ENCODE measurements at regions of chr5 and their contacts with region 1.

Region 1: DNA sequence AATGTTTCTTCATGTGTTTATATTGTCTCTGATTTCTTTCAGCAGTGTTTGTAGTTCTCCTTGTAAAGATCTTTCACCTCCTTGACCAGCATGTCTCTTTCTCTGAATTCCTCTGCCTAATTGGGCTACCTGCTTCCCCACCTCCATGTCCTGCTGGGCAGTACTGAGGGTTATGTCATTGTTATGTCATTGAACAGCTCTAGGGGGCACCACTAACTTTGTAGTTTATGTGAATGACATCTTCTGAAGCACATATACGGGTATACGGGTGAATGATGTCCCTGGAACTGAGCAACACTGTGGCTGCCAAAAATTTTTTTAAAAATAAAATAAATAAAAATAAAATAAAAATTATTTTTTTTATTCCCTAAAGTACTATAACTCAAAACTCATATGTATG is 16.9 kb upstream of the SNCAIP start:
- DNase-seq: no peak
- ATAC-seq: peak; percentile 82
- H3K4me3 ChIP-seq: no peak overlapping the region
- H3K27ac ChIP-seq: no peak overlapping the region
- H3K4me1 ChIP-seq: peaks cover 12% of the 10 kb centered on the region
- H3K27me3 ChIP-seq: no peaks in the 10 kb centered on the region; a peak in 1 of 4 replicates
- CTCF ChIP-seq: peak; percentile 36 to 46 (median 38); a peak in 4 of 6 replicates
- EP300 ChIP-seq: no peak
- POLR2A ChIP-seq: no peak
- RAD21 ChIP-seq: peak; percentile 29; the same call in 1 of the 2 replicates

Region 2: DNA sequence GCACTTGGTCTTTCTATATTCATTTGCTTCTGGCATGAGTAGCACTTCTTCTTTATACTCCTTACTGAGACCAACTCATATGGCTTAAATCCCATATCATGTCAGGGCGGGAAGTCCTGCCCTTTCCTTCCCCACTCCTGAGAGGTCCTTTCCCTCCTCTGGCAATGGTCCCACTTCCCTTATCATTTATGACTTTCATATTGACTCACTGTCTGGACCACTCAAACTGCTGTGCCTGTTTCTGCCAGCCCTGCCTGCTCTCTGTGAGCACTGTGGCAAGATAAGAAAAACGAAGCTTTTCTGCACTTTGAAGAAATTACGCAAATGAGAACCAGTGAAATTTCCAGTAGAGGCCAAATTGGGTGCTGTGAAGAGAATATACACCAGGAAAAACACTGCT is 107.7 kb before region 1 on chr5:
- CTCF ChIA-PET with region 1: no interaction called
- POLR2A ChIA-PET with region 1: no interaction called
- RAD21 ChIA-PET with region 1: no interaction called
- SMC1A ChIA-PET with region 1: no interaction called
- in situ Hi-C with region 1: no loop called
- intact Hi-C with region 1: no loop called
- DNase-seq: no peak
- ATAC-seq: no peak
- H3K4me3 ChIP-seq: no peak overlapping the region
- H3K27ac ChIP-seq: no peak overlapping the region
- H3K4me1 ChIP-seq: no peaks in the 10 kb centered on the region; the same call in 1 of the 2 replicates
- H3K27me3 ChIP-seq: no peaks in the 10 kb centered on the region; a peak in 2 of 4 replicates
- CTCF ChIP-seq: no peak
- EP300 ChIP-seq: no peak
- POLR2A ChIP-seq: no peak
- RAD21 ChIP-seq: no peak

Region 3: DNA sequence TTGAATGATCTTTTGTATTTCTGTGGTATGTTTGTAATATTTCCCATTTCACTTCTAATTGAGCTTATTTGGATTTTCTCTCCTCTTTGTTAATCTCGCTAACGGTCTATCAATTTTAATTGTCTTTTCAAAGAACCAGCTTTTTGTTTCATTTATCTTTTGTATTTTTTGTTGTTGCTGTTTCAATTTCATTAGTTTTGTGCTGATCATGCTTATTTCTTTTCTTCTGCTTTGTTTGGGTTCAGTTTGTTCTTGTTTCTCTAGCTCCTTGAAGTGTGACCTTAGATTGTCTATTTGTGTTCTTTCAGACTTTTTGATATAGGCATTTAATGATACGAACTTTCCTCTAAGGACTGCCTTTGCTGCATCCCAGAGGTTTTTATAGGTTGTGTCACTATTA is 11.5 kb before region 1 on chr5:
- CTCF ChIA-PET with region 1: interaction called, 10 read pairs
- POLR2A ChIA-PET with region 1: interaction called, 3 read pairs
- RAD21 ChIA-PET with region 1: interaction called, 3 read pairs
- SMC1A ChIA-PET with region 1: interaction called, 3 read pairs
- in situ Hi-C with region 1: no loop called
- intact Hi-C with region 1: no loop called
- DNase-seq: no peak
- ATAC-seq: no peak
- H3K4me3 ChIP-seq: no peak overlapping the region
- H3K27ac ChIP-seq: no peak overlapping the region
- H3K4me1 ChIP-seq: no peaks in the 10 kb centered on the region
- H3K27me3 ChIP-seq: no peaks in the 10 kb centered on the region
- CTCF ChIP-seq: no peak
- EP300 ChIP-seq: no peak
- POLR2A ChIP-seq: no peak
- RAD21 ChIP-seq: no peak

Region 4: GRCh38 chr5:122306461-122306860 is 11.3 kb after region 1 on chr5:
- CTCF ChIA-PET with region 1: interaction called, 13 read pairs
- POLR2A ChIA-PET with region 1: interaction called, 3 read pairs
- RAD21 ChIA-PET with region 1: interaction called, 4 read pairs
- SMC1A ChIA-PET with region 1: interaction called, 11 read pairs
- in situ Hi-C with region 1: no loop called
- intact Hi-C with region 1: no loop called
- DNase-seq: no peak
- ATAC-seq: no peak
- H3K4me3 ChIP-seq: no peak overlapping the region
- H3K27ac ChIP-seq: no peak overlapping the region
- H3K4me1 ChIP-seq: no peaks in the 10 kb centered on the region
- H3K27me3 ChIP-seq: peaks cover 0 to 5% of the 10 kb centered on the region in 2 experiments; a peak in 2 of 4 replicates
- CTCF ChIP-seq: no peak
- EP300 ChIP-seq: no peak
- POLR2A ChIP-seq: no peak
- RAD21 ChIP-seq: no peak

Measured in GM12878 (cell line).